GM12878 (cell line): ENCODE measurements at regions of chr3 and their contacts with region 1.

Region 1: GRCh38 chr3:99355465-99355864 is 282.9 kb upstream of the COL8A1 start:
- DNase-seq: no peak
- ATAC-seq: no peak
- H3K4me3 ChIP-seq: no peak overlapping the region
- H3K27ac ChIP-seq: no peak overlapping the region
- H3K4me1 ChIP-seq: no peaks in the 10 kb centered on the region
- H3K27me3 ChIP-seq: no peaks in the 10 kb centered on the region
- CTCF ChIP-seq: no peak
- EP300 ChIP-seq: no peak
- POLR2A ChIP-seq: no peak
- RAD21 ChIP-seq: no peak

Region 2: GRCh38 chr3:99342383-99342782 is 13.1 kb before region 1 on chr3:
- CTCF ChIA-PET with region 1: interaction called, 5 read pairs
- POLR2A ChIA-PET with region 1: no interaction called
- RAD21 ChIA-PET with region 1: no interaction called
- SMC1A ChIA-PET with region 1: interaction called, 11 read pairs
- in situ Hi-C with region 1: no loop called
- intact Hi-C with region 1: no loop called
- DNase-seq: no peak
- ATAC-seq: no peak
- H3K4me3 ChIP-seq: no peak overlapping the region
- H3K27ac ChIP-seq: no peak overlapping the region
- H3K4me1 ChIP-seq: no peaks in the 10 kb centered on the region
- H3K27me3 ChIP-seq: no peaks in the 10 kb centered on the region
- CTCF ChIP-seq: no peak
- EP300 ChIP-seq: no peak
- POLR2A ChIP-seq: no peak
- RAD21 ChIP-seq: no peak